ENCODE measurements at regions of chrX and their contacts with region 1.

Region 1: GRCh38 chrX:101799387-101799786 is 132.4 kb downstream of the ZMAT1 start:
- DNase-seq: peak; percentile 88
- H3K4me3 ChIP-seq: peak overlapping the region in 2 of 8 donors; percentile 15 to 50
- H3K27ac ChIP-seq: no peak overlapping the region
- H3K4me1 ChIP-seq: no peaks in the 10 kb centered on the region
- H3K27me3 ChIP-seq: no peaks in the 10 kb centered on the region
- CTCF ChIP-seq: peak; percentile 62 to 88 (median 80)
- POLR2A ChIP-seq: no peak

Region 2: DNA sequence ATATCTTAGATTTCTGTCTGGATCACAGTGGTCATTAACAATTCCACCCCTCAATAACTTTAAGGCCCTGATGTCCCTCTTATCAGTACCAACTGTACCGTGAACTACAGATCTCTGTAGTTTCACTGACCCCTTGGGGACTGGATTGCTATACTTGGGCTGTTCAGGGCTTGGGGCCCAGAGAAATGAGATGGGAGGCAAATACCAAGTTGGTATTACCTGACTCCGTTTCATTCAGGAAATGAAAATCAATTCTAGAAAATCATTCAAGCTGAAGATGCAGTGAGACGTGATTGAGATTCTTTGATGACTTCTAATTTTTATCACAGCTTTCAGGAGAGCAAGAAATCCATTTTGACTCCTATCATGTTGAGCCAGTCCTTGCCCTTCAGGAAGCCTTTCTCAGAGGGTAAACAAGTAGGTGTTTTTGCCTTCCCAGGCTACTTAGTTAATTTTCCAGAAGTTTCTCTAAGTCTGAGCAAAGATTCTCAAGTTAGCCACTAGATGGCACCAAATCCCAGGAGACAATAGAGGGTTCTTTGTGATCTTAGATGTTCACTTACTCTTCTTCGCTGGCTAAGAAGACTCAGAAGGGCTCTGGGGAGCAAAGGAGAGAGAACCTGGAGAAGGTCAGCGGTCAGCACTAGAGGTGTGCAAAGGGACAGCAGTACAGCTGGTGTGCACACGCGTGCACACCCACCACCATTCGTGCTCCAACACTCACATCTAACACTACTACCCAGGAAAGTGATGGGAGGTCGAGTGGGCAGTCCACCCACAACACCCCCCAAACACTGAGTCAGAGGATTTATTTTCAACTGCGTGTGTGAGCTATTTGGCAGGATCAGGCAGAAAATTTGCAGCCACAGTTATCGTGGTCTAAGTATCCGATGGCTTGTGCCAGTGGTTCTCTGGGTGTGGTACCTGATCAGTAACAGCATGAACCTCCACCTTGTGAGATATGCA is 383.9 kb before region 1 on chrX:
- intact Hi-C with region 1: loop called (anchors 5 kb)
- DNase-seq: no peak
- H3K4me3 ChIP-seq: no peak overlapping the region
- H3K27ac ChIP-seq: peak overlapping the region in 7 of 8 donors; percentile 27 to 81 (median 53)
- H3K4me1 ChIP-seq: peaks cover 8 to 71% (median 26%) of the 10 kb centered on the region in 6 donors
- H3K27me3 ChIP-seq: peaks cover 0 to 7% (median 0%) of the 10 kb centered on the region in 7 donors
- CTCF ChIP-seq: peak; percentile 24 to 79 (median 71)
- POLR2A ChIP-seq: no peak

Region 3: GRCh38 chrX:101462892-101463291 is 336.5 kb before region 1 on chrX:
- intact Hi-C with region 1: no loop called
- DNase-seq: no peak
- H3K4me3 ChIP-seq: no peak overlapping the region
- H3K27ac ChIP-seq: no peak overlapping the region
- H3K4me1 ChIP-seq: no peaks in the 10 kb centered on the region
- H3K27me3 ChIP-seq: no peaks in the 10 kb centered on the region
- CTCF ChIP-seq: no peak
- POLR2A ChIP-seq: no peak

Region 4: GRCh38 chrX:101595739-101596419 is 203.5 kb before region 1 on chrX:
- intact Hi-C with region 1: loop called (anchors 5 kb)
- DNase-seq: no peak
- H3K4me3 ChIP-seq: no peak overlapping the region
- H3K27ac ChIP-seq: no peak overlapping the region
- H3K4me1 ChIP-seq: no peaks in the 10 kb centered on the region
- H3K27me3 ChIP-seq: peaks cover 0 to 29% (median 0%) of the 10 kb centered on the region in 7 donors
- CTCF ChIP-seq: peak in 10 of 11 experiments; percentile 19 to 81 (median 60)
- POLR2A ChIP-seq: no peak

Measured in spleen (tissue), 13 donors.